ENCODE measurements at regions of chr20 and their contacts with region 1.

Region 1: GRCh38 chr20:45934586-45935415 is at the start of gene PCIF1:
- DNase-seq: peak; percentile 93
- H3K4me3 ChIP-seq: peak within 1 kb of the TSS; percentile 97 to 98 (median 97)
- H3K27ac ChIP-seq: peak within 1 kb of the TSS; percentile 87
- H3K4me1 ChIP-seq: peaks cover 5% of the 10 kb centered on the region
- H3K27me3 ChIP-seq: no peaks in the 10 kb centered on the region
- CTCF ChIP-seq: no peak
- total RNA-seq, gene PCIF1: 12.7 to 18.9 TPM

Region 2: DNA sequence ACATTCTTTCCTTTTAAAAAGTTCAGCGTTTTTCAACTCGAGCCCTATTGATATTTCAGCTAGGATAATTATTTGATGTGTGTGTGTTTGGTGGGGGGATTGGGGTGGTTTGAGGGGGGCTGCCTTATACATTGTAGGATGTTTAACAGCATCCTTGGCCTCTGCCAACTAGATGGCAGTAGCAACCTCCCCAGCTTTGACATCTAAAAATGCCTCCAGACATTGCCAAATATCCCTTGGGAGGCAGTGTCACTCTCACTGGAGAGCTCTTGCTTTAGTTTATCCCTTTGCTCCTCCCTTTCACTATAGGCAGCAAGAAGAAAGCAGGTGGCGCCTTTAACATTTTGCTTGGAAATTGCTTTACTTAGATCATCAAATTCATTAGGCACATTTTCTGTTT is 542.1 kb before region 1 on chr20:
- CTCF ChIA-PET with region 1: interaction called, 14 read pairs
- dilution Hi-C with region 1: no loop called
- in situ Hi-C with region 1: no loop called
- intact Hi-C with region 1: no loop called
- DNase-seq: no peak
- H3K4me3 ChIP-seq: no peak overlapping the region
- H3K27ac ChIP-seq: no peak overlapping the region
- H3K4me1 ChIP-seq: no peaks in the 10 kb centered on the region
- H3K27me3 ChIP-seq: no peaks in the 10 kb centered on the region
- CTCF ChIP-seq: peak in 1 of 2 donors; percentile 29

Region 3: GRCh38 chr20:45833030-45833882 is 101.5 kb before region 1 on chr20 and contains the start of gene SNX21:
- CTCF ChIA-PET with region 1: no interaction called
- dilution Hi-C with region 1: no loop called
- in situ Hi-C with region 1: no loop called
- intact Hi-C with region 1: loop called (anchors 2 kb)
- DNase-seq: peak; percentile 80
- H3K4me3 ChIP-seq: peak within 1 kb of the TSS; percentile 60 to 94 (median 68)
- H3K27ac ChIP-seq: peak within 1 kb of the TSS; percentile 70
- H3K4me1 ChIP-seq: peaks cover 26% of the 10 kb centered on the region
- H3K27me3 ChIP-seq: no peaks in the 10 kb centered on the region
- CTCF ChIP-seq: no peak
- total RNA-seq, gene SNX21: 14.1 to 34.5 TPM

Region 4: GRCh38 chr20:45857114-45857881 is 77.5 kb before region 1 on chr20 and contains the starts of genes ACOT8 and ZSWIM3:
- CTCF ChIA-PET with region 1: no interaction called
- dilution Hi-C with region 1: no loop called
- in situ Hi-C with region 1: no loop called
- intact Hi-C with region 1: loop called (anchors 2 kb)
- DNase-seq: peak; percentile 100
- H3K4me3 ChIP-seq: peak within 1 kb of the TSS; percentile 73 to 76 (median 74)
- H3K27ac ChIP-seq: peak within 1 kb of the TSS; percentile 35
- H3K4me1 ChIP-seq: peaks cover 4% of the 10 kb centered on the region
- H3K27me3 ChIP-seq: no peaks in the 10 kb centered on the region
- CTCF ChIP-seq: no peak
- total RNA-seq, gene ACOT8: 22.3 to 34.0 TPM
- total RNA-seq, gene ZSWIM3: 1.9 to 5.8 TPM

Region 5: GRCh38 chr20:45890985-45891983 is 43.5 kb before region 1 on chr20 and contains the starts of genes CTSA and NEURL2:
- CTCF ChIA-PET with region 1: no interaction called
- dilution Hi-C with region 1: no loop called
- in situ Hi-C with region 1: no loop called
- intact Hi-C with region 1: loop called (anchors 1 kb)
- DNase-seq: peak; percentile 80
- H3K4me3 ChIP-seq: peak within 1 kb of the TSS; percentile 75 to 93 (median 89)
- H3K27ac ChIP-seq: peak within 1 kb of the TSS; percentile 22
- H3K4me1 ChIP-seq: peaks cover 30% of the 10 kb centered on the region
- H3K27me3 ChIP-seq: no peaks in the 10 kb centered on the region
- CTCF ChIP-seq: no peak
- total RNA-seq, gene CTSA: 32.5 to 68.8 TPM
- total RNA-seq, gene NEURL2: 2.1 to 3.3 TPM